ENCODE measurements at regions of chr7 and their contacts with region 1.

Region 1: DNA sequence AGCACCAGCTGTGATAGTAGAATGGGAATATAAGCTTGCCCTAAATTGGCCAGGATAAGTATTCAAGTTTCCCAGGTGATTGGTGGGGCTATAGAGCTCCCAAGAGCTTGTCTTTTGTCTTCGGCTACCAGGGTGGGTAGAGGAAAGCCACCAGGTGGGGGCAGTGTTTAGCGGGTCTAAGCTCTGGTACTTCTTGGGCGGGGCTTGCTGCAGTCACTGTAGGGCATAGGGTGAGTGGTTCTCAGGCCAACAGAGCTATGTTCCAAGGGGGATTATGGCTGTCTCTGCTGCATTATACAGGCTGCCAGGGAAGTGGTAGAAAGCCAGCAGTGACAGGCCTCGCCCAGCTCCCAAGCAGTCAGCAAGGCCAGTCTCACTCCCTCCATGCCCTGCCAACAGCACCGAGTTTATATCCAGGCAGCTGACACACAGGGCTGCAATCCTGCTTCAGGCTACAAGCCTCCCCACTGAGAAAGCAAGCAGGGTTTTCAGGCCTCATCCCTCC is 110.7 kb downstream of the ZNF467 start:
- DNase-seq: peak; percentile 83
- H3K4me3 Mint-ChIP-seq: no peak overlapping the region
- H3K27ac Mint-ChIP-seq: no peak overlapping the region
- H3K4me1 Mint-ChIP-seq: no peaks in the 10 kb centered on the region
- H3K27me3 Mint-ChIP-seq: peaks cover 15% of the 10 kb centered on the region

Region 2: GRCh38 chr7:149748076-149748874 is 85.6 kb after region 1 on chr7:
- CTCF ChIA-PET with region 1: interaction called, 12 read pairs
- intact Hi-C with region 1: no loop called
- DNase-seq: no peak
- H3K4me3 Mint-ChIP-seq: no peak overlapping the region
- H3K27ac Mint-ChIP-seq: no peak overlapping the region
- H3K4me1 Mint-ChIP-seq: no peaks in the 10 kb centered on the region
- H3K27me3 Mint-ChIP-seq: no peaks in the 10 kb centered on the region

Region 3: GRCh38 chr7:149790146-149790548 is 127.5 kb after region 1 on chr7:
- CTCF ChIA-PET with region 1: interaction called, 11 read pairs
- intact Hi-C with region 1: loop called (anchors 2 kb)
- DNase-seq: peak; percentile 57
- H3K4me3 Mint-ChIP-seq: no peak overlapping the region
- H3K27ac Mint-ChIP-seq: no peak overlapping the region
- H3K4me1 Mint-ChIP-seq: peaks cover 3% of the 10 kb centered on the region
- H3K27me3 Mint-ChIP-seq: peaks cover 14% of the 10 kb centered on the region

Region 4: DNA sequence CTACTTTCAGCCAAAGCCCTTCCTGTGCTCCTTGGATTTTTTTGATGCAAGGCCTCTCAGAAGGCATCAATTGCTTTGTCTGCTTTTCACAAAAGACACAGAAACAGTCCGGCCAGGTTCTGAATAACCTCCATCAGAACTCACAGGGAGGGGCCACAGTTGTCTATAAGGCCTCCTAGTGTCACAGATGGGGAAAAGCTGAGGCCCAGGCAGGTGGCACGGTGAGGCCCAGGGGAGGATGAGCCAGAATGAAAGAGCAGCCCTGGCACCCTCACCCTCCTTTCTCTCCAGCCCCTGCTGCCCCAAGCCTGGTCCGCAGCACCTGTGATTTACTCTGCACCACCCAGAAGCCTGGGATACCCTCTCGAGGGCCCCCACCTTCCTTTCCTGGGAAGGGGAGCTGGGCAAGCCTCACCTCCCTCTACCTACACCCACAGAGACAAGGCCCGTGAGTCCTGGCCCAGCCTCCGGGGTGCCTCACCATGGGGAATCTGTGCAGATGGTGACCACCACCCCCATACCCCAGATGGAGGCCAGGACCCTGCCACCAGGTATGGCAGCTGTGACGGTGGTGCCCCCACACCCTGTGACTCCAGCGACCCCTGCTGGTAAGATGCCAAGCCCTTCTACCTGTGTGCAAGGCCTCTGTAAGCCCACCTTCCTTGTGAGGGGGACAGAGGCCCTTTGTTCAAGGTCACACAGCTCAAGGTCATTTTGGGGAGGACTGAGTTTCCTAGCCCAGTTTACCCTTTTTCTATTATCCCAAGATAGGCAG is 136.9 kb after region 1 on chr7:
- CTCF ChIA-PET with region 1: interaction called, 10 read pairs
- intact Hi-C with region 1: loop called (anchors 1 kb)
- DNase-seq: peak; percentile 75
- H3K4me3 Mint-ChIP-seq: no peak overlapping the region
- H3K27ac Mint-ChIP-seq: no peak overlapping the region
- H3K4me1 Mint-ChIP-seq: no peaks in the 10 kb centered on the region
- H3K27me3 Mint-ChIP-seq: no peaks in the 10 kb centered on the region

Measured in activated naive CD4-positive, alpha-beta T cell treated with anti-CD3 and anti-CD28 coated beads for 36 hours (primary cell).